ENCODE measurements at regions of chr6 and their contacts with region 1.

Region 1: DNA sequence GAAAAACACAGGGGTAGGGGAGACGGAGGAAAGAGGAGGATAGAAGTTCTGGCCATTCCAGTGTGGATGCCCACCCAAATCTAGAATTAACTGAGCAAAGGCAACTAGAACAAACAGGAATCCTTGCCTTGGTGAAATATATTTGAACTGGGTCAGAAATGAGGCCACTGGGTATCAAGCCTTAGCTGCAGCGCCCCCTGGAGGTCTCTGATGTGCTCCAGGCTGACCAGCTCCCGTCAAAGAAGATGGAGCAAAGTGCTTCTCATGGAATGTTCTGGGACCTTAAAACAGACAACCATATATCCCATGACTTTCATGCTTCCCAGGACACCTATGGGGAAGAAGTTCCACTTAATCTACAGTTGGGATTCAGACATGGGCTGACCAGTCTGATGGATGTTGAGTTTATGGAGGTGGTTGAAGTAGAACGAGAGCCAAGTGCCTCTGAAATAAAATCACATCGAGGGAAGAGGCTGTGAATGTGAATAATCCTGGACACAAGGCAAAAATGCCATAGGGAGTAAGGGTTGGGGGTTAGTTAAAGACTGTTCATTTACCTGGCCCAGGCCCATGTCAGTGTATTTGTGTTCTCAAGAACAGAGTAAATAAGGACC is 50.4 kb downstream of the HLA-DPB1 start:
- DNase-seq: peak; percentile 83
- ATAC-seq: peak; percentile 42
- H3K4me3 Mint-ChIP-seq: no peak overlapping the region
- H3K27ac Mint-ChIP-seq: no peak overlapping the region
- H3K4me1 Mint-ChIP-seq: no peaks in the 10 kb centered on the region
- H3K27me3 Mint-ChIP-seq: peaks cover 7% of the 10 kb centered on the region

Region 2: DNA sequence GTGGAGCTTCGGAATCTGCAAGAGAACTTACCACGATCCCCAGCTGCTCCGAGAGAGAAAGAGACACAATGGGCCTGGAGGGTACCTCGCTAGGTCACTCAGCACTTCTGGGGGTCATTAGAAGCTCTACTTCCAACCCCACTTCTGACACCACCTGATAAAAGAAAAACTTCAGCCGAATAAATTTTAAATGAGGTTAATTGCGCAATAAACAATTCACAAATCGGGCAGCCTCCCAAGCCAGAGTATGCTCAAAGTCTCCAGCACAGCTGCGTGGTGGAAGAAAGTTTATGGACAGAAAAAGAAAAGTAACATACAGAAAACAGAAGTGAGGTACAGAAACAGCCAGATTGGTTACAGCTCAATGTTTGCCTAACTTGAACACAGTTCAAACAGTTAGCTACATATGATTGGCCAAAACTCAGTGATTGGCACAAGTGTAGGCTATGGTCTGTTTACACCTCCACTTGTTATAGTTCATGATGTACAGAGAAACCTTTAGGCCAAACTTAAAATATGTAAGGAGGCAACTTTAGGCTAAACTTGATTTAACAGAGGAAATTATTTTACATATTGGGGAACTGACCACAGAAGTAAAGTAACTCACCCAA is 13.5 kb after region 1 on chr6:
- CTCF ChIA-PET with region 1: interaction called, 26 read pairs
- POLR2A ChIA-PET with region 1: no interaction called
- intact Hi-C with region 1: no loop called
- DNase-seq: no peak
- ATAC-seq: no peak
- H3K4me3 Mint-ChIP-seq: no peak overlapping the region
- H3K27ac Mint-ChIP-seq: no peak overlapping the region
- H3K4me1 Mint-ChIP-seq: no peaks in the 10 kb centered on the region
- H3K27me3 Mint-ChIP-seq: peaks cover 23% of the 10 kb centered on the region

Region 3: GRCh38 chr6:33154349-33154748 is 28.1 kb after region 1 on chr6:
- CTCF ChIA-PET with region 1: interaction called, 14 read pairs
- POLR2A ChIA-PET with region 1: no interaction called
- intact Hi-C with region 1: no loop called
- DNase-seq: no peak
- ATAC-seq: no peak
- H3K4me3 Mint-ChIP-seq: no peak overlapping the region
- H3K27ac Mint-ChIP-seq: no peak overlapping the region
- H3K4me1 Mint-ChIP-seq: no peaks in the 10 kb centered on the region
- H3K27me3 Mint-ChIP-seq: peaks cover 11% of the 10 kb centered on the region

Region 4: DNA sequence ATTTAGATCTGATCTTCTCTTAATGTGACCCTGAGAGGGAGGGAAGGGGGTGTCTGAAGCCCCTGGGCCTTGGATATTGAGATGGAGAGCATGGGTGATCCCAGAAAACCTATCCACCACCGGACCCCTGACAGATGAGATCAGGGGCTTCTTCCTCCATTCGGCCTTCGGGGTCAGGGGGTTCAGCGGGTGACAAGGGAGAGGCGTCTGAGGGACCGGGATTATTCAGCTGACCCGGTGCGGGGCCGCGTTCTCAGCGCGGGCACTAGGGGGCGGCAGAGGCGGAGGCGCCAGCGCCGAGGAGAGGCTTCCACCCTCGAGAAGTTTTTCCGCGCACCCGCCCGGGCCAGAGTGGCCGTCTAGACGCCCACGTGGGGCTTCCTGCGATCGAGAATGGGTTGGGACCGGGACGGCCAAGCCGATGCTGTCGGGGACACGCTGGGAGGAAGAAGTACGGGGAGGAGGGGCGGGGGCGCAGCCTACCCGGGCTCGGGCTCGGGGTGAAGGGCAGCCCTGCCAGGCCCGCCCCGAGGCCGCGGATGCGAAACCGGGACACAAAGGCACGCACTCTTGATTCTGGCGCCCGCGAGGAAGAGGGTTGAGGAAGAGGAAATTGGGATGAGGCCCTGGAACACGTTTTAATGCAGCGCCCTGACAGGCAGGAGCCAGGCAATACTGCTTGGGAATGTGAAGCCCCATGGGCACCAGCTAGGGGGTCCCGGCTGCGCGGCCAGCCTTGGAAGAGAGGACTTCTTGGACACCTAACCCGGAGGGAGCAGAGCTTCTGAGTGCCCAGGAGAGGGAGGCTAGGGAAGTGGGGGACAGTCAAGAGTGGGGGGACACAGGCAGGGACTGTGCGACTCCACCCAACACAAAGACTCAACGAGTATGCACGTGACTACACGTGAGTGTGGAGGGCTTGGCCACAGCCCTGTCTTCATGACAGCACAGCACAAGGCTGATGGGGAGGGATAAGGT is 35.4 kb after region 1 on chr6:
- CTCF ChIA-PET with region 1: interaction called, 6 read pairs
- POLR2A ChIA-PET with region 1: no interaction called
- intact Hi-C with region 1: loop called in 1 of 2 experiments (anchors 1 kb)
- DNase-seq: peak; percentile 90
- ATAC-seq: peak; percentile 95
- H3K4me3 Mint-ChIP-seq: peak overlapping the region; percentile 71
- H3K27ac Mint-ChIP-seq: peak overlapping the region; percentile 43
- H3K4me1 Mint-ChIP-seq: peaks cover 10% of the 10 kb centered on the region
- H3K27me3 Mint-ChIP-seq: peaks cover 4% of the 10 kb centered on the region

Measured in activated CD4-positive, alpha-beta T cell treated with anti-CD3 and anti-CD28 coated beads for 36 hours (primary cell).